Activated CD8-positive, alpha-beta T cell treated with anti-CD3 and anti-CD28 coated beads for 36 hours (primary cell): ENCODE measurements at regions of chr6 and their contacts with region 1.

Region 1: GRCh38 chr6:28207510-28208110 is 17.5 kb upstream of the ZSCAN9 start:
- DNase-seq: peak; percentile 61
- ATAC-seq: peak; percentile 71
- H3K4me3 Mint-ChIP-seq: peak overlapping the region; percentile 76
- H3K27ac Mint-ChIP-seq: no peak overlapping the region
- H3K4me1 Mint-ChIP-seq: peaks cover 20% of the 10 kb centered on the region
- H3K27me3 Mint-ChIP-seq: peaks cover 69% of the 10 kb centered on the region
- CTCF ChIP-seq: no peak

Region 2: GRCh38 chr6:28145231-28145630 is 62.4 kb before region 1 on chr6:
- CTCF ChIA-PET with region 1: no interaction called
- POLR2A ChIA-PET with region 1: no interaction called
- intact Hi-C with region 1: loop called (anchors 5 kb)
- DNase-seq: no peak
- ATAC-seq: no peak
- H3K4me3 Mint-ChIP-seq: no peak overlapping the region
- H3K27ac Mint-ChIP-seq: no peak overlapping the region
- H3K4me1 Mint-ChIP-seq: peaks cover 36% of the 10 kb centered on the region
- H3K27me3 Mint-ChIP-seq: no peaks in the 10 kb centered on the region
- CTCF ChIP-seq: no peak